Left ventricle myocardium superior (tissue), 1 donor: ENCODE measurements at regions of chr2 and their contacts with region 1.

Region 1: DNA sequence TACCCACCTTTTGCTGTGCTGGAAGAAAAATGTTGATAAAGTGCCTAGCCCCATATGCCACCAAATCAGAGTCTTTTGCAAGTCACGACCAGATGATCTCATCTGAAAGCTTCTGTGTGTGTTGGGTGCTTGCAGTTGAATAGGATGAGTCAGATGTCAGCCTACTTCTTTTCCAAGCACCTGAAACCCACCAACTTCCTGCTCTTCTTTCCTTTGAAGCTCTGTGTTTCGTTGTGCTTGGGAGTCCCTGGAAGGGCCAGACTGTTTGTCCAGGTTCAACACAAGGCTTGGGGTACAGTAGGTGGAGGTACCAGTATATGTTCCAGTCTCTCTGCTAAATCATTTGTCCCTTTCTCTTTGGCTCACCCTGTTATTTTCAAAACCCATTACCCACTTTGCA is 36.8 kb upstream of the LCLAT1 start:
- DNase-seq: no peak
- ATAC-seq: no peak

Region 2: DNA sequence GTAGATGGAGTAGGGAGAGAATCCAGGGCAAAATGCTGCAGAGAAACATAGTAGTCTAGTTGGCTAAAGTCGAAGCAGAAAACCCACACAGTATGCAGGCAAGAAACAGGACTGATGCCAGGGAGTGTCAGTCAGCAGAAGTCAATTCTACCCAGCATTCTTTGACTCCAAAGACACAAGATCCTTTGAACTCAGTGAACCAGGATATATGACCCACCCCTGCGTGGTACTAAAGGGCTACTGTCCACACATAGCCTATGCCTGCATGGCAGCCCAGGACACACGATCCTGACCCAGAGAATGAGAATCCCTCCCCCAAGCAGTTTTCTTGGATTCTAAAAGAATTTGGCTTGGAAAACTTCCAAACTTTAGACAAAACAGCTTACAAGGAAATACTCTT is 531.3 kb before region 1 on chr2:
- intact Hi-C with region 1: no loop called
- DNase-seq: no peak
- ATAC-seq: no peak

Region 3: DNA sequence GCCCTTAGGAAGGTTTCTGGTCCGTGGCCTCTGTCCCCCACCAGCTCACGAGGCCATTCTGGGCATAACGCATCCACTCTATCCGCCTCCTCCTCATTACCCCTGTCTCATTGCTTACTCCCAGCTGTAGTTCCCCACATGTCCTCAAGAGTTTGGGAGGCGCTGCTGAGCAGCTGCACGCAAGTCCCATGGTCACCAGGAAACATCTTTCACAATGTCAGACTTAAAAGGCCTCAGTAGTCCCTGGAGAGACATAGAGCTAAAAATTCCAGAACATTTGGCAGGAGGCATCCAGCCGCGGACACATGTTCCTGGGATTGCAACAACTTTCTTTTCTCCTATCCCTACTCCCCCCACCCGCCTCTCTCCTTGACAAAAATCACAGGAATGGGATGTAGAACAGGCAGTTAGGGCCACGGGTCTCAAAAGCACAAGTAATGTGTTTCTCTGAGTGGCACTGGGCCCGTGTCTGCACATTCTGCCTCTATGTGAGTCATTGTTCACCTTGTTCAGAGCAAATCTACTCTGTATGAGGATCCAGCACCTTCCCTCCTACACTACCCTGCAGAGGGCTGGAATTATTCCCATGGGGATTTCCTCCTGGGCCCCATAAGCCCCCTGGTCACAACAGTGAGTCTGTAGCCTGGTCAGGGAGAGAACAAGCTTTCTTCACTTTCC is 170.8 kb before region 1 on chr2:
- intact Hi-C with region 1: loop called (anchors 5 kb)
- DNase-seq: peak; percentile 80
- ATAC-seq: peak; percentile 75

Region 4: GRCh38 chr2:30346471-30347169 is 63.6 kb before region 1 on chr2:
- intact Hi-C with region 1: loop called (anchors 10 kb)
- DNase-seq: peak; percentile 87
- ATAC-seq: peak; percentile 98